Activated CD8-positive, alpha-beta T cell treated with anti-CD3 and anti-CD28 coated beads, Interleukin-2, amount 10 ng/mL, durations not matched to agents 7 days and 5 days (primary cell): ENCODE measurements at regions of chr1 and their contacts with region 1.

Region 1: GRCh38 chr1:27489910-27490741 is at the start of gene WASF2:
- DNase-seq: peak; percentile 98
- ATAC-seq: peak; percentile 94
- H3K4me3 Mint-ChIP-seq: peak within 1 kb of the TSS; percentile 83
- H3K27ac Mint-ChIP-seq: peak within 1 kb of the TSS; percentile 99
- H3K4me1 Mint-ChIP-seq: peaks cover 28% of the 10 kb centered on the region
- H3K27me3 Mint-ChIP-seq: no peaks in the 10 kb centered on the region
- total RNA-seq, gene WASF2: 120 to 127 TPM

Region 2: DNA sequence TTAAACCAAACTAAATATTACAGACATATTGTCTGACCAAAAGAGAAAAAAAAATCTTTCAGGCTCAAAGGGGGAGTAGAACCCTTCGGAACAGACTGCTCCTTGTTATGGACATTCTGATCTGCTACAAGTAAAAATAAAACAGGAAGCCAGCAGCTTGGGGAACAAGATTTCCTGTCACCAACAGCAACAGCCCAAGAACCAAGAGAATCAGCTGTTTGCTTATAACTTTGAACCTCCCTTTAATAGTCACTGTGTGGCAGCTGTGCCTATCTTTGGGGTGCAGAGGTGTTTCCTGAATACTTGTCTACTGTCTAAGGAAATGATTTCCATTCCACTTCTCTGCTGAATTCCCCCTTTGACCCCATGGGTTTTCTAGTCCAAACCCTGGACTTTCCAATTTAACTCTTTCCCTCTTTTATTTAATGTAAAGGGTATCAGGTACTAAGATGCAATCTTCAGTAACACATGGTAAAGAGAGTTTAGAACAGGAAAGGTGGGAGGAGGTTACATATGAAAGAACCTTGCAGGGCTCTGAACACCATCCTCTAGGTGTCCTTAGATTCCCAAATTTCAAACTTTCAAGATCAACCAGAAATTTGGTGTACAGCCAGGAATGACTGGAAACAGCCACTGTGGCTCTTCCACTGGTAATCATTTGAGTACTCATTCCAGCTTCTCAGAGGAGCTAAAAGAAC is 59.1 kb before region 1 on chr1:
- CTCF ChIA-PET with region 1: interaction called, 3 read pairs
- POLR2A ChIA-PET with region 1: interaction called, 10 read pairs
- DNase-seq: peak; percentile 44
- ATAC-seq: peak; percentile 78
- H3K4me3 Mint-ChIP-seq: peak overlapping the region; percentile 47
- H3K27ac Mint-ChIP-seq: peak overlapping the region; percentile 70
- H3K4me1 Mint-ChIP-seq: peaks cover 56% of the 10 kb centered on the region
- H3K27me3 Mint-ChIP-seq: no peaks in the 10 kb centered on the region

Region 3: GRCh38 chr1:27736252-27736651 is 246.1 kb after region 1 on chr1:
- CTCF ChIA-PET with region 1: no interaction called
- POLR2A ChIA-PET with region 1: no interaction called
- DNase-seq: no peak
- ATAC-seq: no peak
- H3K4me3 Mint-ChIP-seq: no peak overlapping the region
- H3K27ac Mint-ChIP-seq: no peak overlapping the region
- H3K4me1 Mint-ChIP-seq: no peaks in the 10 kb centered on the region
- H3K27me3 Mint-ChIP-seq: no peaks in the 10 kb centered on the region